GM18951 (cell line): ENCODE measurements at regions of chr16 and their contacts with region 1.

Region 1: DNA sequence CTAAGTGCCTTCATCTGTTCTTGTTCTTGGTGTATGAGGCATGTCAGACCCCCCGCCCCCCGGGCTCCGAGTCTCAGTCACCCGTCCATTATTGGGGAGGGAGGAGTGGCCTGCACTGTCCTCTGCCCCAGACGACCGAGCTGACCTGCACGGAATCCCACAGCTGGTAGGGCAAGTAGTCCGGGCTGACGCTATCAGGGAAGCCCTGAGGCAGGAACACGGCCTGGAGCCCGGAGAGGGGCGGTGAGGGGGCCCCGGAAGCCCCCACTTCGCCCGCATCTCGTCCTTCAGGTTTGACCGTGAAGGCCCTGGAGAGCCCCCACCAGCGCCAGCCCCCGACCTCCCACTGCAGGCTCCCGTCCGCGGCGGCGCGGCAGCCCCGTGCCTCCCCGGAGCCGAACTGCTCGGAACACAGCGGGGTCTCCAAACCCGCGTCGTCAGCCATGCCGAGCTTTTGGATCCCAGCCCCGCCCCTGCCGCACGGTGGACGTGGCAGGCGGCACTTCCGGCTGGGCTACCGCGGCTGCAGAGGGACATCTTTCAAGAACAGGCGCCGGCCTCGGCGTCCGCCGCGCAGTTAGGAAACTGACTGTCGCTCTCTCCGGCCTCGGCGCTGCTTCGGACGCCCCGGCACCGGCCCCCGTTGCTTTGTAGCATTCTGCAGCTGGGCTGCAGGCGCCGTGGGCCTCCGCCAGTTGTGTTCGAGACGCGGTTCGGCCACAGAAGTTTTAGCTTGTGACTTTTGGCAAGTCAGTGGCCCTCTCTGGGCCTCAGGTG is at the start of gene RUSF1:
- POLR2A ChIP-seq: peak; percentile 93

Region 2: DNA sequence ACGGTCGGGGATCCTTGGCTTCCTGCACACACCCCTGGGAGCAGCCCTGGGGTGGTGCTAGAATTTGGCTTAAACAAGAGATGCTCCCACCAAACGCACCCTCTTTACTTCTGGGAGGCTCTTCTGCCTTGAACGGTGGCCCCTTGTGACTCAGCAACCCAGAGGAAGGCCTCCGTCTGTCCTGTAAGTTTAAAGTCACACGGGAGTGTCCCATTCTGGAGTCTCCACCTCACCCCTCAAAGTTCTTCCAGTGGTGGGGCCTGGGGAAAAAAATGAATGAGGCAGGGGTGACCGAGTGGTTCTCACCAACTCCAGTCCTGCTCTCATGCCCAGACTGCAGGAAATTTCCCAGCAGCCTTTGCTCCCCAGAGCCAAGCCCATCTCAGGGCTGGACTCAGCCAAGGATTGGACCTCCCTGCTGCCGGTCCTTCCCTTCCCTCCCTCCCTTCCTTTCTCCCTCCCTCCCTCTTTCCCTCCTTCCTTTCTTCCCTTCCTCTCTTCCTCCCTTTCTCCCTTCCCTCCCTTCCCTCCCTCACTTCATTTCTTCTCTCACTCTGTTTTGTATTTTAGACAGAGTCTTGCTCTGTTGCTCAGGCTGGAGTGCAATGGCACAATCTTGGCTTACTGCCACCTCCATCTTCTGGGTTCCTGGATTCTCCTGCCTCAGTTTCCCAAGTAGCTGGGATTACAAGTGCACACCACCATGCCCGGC is 103.6 kb before region 1 on chr16:
- in situ Hi-C with region 1: no loop called
- POLR2A ChIP-seq: no peak

Region 3: DNA sequence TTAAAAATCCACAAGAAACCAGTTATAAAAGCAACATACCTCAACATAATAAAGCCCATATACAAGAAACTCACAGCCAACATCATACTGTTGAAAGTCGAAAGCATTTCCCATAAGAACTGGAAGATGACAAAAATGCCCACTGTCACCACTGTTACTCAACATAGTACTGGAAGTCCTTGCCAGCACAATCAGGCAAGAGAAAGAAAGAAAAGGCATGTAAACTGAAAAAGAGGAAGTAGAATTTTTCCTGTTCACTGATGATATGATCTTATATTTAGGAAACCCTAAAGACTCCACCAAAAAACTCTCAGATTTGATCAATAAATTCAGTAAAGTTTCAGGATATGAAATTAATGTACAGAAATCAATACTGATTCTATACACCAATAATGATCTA is 64.7 kb after region 1 on chr16:
- in situ Hi-C with region 1: no loop called
- POLR2A ChIP-seq: no peak

Region 4: DNA sequence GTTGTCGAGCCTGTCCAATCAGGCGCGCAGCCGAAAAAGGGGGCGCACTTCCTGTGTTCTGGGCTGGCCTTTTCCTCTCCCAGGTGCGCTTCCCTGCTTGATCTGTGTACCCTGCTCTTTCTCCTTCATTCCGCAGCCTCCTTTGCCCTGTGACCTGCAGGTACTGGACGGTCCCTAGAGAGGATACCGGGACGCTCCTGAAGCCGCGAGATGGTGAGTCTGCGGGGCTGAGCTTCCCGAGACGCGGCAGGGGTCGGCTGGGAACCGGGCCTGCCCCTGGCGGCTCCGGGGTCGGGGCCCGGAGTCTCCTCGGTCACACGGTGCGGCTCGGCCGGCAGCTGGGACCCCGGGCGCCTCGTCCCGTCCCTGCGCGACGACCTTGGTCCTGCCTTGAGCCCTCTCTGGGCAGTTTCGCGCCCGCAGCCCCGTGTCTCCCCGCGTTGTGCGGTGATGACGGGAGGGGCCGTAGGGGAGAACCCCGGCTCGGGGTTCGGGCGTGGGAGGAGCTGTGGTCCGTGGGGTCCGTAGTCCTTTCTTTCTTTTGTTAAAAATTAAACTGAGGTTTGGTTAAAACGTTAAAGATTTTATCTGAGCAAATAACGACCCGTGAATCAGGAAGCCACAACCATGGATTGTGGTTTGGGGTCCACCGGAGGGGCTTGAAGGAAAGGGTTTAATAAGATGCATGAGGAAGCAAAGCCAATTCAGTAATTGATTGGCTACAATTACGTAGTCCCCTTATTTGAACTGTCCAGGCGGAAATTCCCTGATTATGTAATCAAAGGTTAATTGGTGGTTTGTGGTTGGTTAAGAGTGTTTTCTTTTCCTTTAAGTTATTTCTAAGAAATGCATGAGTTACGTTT is 192.6 kb after region 1 on chr16:
- in situ Hi-C with region 1: loop called (anchors 10 kb)
- POLR2A ChIP-seq: peak; percentile 72